ENCODE measurements at regions of chr19 and their contacts with region 1.

Region 1: DNA sequence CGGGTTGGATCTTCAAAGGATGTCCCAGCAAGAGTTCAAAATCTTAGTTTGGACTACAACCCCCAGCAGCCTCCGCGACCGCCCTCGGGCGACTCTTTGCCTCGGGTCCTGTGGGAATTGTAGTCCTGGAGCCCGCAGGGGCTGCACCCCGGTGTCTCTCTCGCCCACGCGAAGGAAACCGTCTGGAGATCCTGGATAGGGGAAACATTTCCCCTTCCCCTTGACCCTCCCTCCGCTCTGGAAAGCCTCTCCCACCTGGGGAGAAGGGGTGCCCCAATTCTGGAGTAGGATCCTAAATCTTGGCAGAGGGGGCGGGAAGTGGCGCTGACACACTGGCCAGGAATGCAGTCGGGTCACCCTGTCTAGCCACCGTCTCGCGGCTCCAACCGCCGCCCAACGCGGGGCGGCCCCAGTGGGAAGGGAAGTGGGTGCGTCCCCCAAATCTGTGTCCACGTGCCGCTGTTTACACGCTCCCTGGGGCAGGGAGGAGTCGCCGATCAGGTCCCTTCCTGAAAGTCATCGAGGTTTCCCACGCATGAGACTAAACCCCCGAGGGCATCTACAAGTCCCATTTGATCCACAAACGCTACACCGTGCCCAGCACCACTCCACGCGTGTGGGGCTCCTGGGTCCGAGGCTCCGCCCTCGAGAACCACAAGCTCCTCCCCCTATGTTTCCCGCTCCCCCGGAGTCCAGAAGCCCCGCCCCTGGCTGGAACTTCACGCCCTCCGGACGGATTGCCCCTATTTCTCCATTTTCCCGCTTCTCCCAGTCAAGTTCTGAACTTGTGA is 761 bp upstream of the PPP1R13L start:
- DNase-seq: peak; percentile 30
- ATAC-seq: peak; percentile 77
- H3K4me3 ChIP-seq: peak overlapping the region; percentile 98
- H3K27ac ChIP-seq: peak overlapping the region; percentile 89
- H3K4me1 ChIP-seq: peaks cover 4% of the 10 kb centered on the region
- H3K27me3 ChIP-seq: no peaks in the 10 kb centered on the region; a peak in 1 of 4 replicates
- CTCF ChIP-seq: no peak
- EP300 ChIP-seq: no peak
- POLR2A ChIP-seq: peak; percentile 45; the same call in 1 of the 2 replicates
- RAD21 ChIP-seq: no peak

Region 2: DNA sequence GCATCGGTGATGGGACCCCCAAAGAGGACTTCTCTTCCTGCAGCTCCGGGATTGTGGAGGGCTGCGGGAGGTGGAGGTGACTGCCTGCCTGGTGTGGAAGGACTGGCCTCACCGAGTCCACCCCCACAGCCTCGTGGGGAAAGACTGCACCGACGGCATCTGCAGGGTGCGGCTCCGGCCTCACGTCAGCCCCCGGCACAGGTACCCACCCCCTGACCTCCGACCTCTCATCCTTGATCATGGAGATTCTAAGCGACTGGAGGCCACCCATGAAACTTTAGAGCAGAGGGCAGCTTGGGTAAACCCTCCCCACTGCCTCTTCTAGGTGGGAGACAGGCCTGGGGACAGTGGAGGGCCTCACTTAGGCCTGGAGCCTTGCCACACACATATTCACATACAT is 383.6 kb before region 1 on chr19:
- CTCF ChIA-PET with region 1: no interaction called
- POLR2A ChIA-PET with region 1: no interaction called
- RAD21 ChIA-PET with region 1: no interaction called
- SMC1A ChIA-PET with region 1: no interaction called
- in situ Hi-C with region 1: no loop called
- intact Hi-C with region 1: no loop called
- DNase-seq: no peak
- ATAC-seq: no peak
- H3K4me3 ChIP-seq: no peak overlapping the region
- H3K27ac ChIP-seq: no peak overlapping the region
- H3K4me1 ChIP-seq: peaks cover 8% of the 10 kb centered on the region
- H3K27me3 ChIP-seq: no peaks in the 10 kb centered on the region
- CTCF ChIP-seq: no peak
- EP300 ChIP-seq: no peak
- POLR2A ChIP-seq: peak; percentile 46; the same call in 1 of the 2 replicates
- RAD21 ChIP-seq: no peak

Region 3: DNA sequence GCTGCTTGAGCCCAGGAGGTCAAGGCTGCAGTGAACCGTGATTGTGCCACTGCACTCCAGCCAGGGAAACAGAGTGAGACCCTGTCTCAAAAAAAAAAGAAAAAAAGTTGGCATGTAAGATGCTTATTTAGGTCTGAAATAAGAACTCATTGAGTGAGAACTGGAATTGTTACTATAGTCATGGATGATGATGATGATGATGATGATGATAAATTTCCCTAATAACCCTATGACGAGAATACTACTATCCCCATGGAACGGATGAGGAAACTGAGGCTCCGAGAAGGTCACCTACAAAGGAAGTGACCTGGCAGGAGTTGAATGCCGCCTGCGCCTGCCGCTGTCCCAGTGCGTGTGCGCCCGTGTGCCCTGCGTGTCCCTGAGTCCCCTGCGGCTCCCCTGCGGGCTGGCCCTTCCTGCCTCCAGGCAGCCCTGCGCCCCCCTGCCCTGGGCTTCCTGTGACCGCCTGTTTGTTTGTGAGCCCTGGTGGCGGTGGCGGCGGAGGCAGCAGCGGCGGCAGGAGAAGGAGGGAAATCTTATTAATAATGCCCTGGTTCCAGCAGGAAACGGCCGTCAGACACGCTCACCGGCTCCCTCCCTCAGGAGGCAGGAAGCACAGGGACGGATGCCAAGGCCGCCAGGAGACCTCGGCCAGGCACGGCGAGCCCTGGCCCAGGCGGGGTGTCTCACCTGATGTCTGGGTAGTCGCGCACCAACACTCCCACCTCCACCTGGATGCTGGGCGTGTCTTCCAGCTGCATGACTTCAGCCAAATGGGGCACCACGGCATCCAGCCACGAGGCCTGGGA is 190.0 kb before region 1 on chr19:
- CTCF ChIA-PET with region 1: no interaction called
- POLR2A ChIA-PET with region 1: no interaction called
- RAD21 ChIA-PET with region 1: no interaction called
- SMC1A ChIA-PET with region 1: no interaction called
- in situ Hi-C with region 1: no loop called
- intact Hi-C with region 1: no loop called
- DNase-seq: no peak
- ATAC-seq: no peak
- H3K4me3 ChIP-seq: no peak overlapping the region
- H3K27ac ChIP-seq: no peak overlapping the region
- H3K4me1 ChIP-seq: no peaks in the 10 kb centered on the region
- H3K27me3 ChIP-seq: peaks cover 2 to 3% of the 10 kb centered on the region in 2 experiments
- CTCF ChIP-seq: no peak
- EP300 ChIP-seq: no peak
- POLR2A ChIP-seq: no peak
- RAD21 ChIP-seq: no peak

Region 4: DNA sequence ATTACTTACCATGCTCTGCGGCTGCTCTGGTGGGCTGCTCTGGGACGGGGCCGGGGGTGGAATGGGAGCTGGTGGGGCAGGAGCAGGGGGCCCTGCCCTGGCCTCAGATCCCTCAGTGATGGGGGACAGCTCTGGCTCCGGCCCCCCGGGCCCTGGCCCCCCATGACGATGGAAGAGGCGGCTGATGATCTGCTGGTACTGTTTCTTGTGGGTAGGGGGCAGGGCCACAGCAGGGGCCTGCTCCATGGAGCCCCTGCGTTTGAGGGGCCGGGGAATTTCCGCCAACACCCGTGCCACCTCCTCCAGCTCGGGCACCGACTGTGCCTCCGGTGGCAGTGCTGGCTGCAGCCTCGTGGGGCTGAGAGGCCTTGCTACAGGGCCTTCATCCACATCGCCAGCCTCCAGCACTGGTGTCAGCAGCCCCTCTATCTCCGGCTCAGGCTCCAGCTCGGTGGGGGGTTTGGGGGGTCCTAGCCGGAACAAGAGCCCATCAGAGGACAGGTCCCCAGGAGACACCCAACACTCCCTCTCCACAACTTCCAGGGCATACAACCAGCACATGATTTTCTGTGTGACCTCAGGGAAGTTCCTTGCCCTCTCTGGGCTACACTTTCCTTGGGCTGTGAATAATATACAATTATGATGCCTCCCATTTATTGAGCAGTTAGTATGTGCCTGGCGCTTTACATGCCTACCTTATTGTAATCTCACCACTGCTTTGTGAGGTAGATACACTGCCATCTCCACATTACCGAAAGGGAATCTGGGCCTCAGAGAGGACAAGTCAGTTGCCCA is 13.6 kb before region 1 on chr19:
- CTCF ChIA-PET with region 1: interaction called, 18 read pairs
- POLR2A ChIA-PET with region 1: no interaction called
- RAD21 ChIA-PET with region 1: no interaction called
- SMC1A ChIA-PET with region 1: interaction called, 4 read pairs
- in situ Hi-C with region 1: no loop called
- intact Hi-C with region 1: no loop called
- DNase-seq: no peak
- ATAC-seq: no peak
- H3K4me3 ChIP-seq: no peak overlapping the region
- H3K27ac ChIP-seq: no peak overlapping the region
- H3K4me1 ChIP-seq: no peaks in the 10 kb centered on the region
- H3K27me3 ChIP-seq: no peaks in the 10 kb centered on the region
- CTCF ChIP-seq: no peak
- EP300 ChIP-seq: no peak
- POLR2A ChIP-seq: no peak
- RAD21 ChIP-seq: no peak

Region 5: GRCh38 chr19:45417151-45417550 is 11.5 kb after region 1 on chr19:
- CTCF ChIA-PET with region 1: interaction called, 42 read pairs
- POLR2A ChIA-PET with region 1: interaction called, 3 read pairs
- RAD21 ChIA-PET with region 1: interaction called, 7 read pairs
- SMC1A ChIA-PET with region 1: interaction called, 3 read pairs
- in situ Hi-C with region 1: no loop called
- intact Hi-C with region 1: loop called (anchors 1 kb)
- DNase-seq: no peak
- ATAC-seq: no peak
- H3K4me3 ChIP-seq: no peak overlapping the region
- H3K27ac ChIP-seq: no peak overlapping the region
- H3K4me1 ChIP-seq: peaks cover 23% of the 10 kb centered on the region
- H3K27me3 ChIP-seq: no peaks in the 10 kb centered on the region
- CTCF ChIP-seq: no peak
- EP300 ChIP-seq: no peak
- POLR2A ChIP-seq: no peak
- RAD21 ChIP-seq: no peak

Region 6: DNA sequence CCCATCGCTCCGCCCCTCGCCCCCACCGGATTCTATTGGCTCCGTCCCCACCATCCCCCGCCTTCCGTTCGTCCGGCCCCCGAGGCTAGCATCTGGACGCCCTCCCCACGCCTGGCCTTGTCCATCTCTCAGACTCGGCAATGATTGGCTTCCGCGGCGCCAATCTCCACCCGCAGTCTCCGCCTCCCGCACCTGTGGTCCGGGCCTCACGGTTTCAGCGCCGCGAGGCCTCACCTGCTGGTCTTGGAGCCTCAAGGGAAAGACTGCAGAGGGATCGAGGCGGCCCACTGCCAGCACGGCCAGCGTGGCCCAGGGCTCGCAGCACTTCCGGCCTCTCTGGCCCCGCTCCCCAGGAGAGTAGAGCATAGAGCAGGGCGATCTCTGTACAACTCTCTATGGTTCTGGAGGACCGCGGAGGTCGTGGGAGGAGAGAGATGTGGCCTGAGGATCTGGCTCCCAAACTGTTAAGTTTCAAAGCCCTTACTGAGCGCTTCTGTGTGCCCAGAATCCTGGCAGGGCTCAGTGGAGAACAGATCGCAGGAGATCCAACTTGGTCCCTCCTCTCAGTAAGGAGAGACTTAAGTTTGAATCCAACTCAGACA is 18.1 kb after region 1 on chr19 and contains the start of gene ERCC1:
- CTCF ChIA-PET with region 1: interaction called, 42 read pairs
- POLR2A ChIA-PET with region 1: interaction called, 16 read pairs
- RAD21 ChIA-PET with region 1: interaction called, 8 read pairs
- SMC1A ChIA-PET with region 1: interaction called, 8 read pairs
- in situ Hi-C with region 1: no loop called
- intact Hi-C with region 1: loop called (anchors 1 kb)
- DNase-seq: peak; percentile 89
- ATAC-seq: peak; percentile 83
- H3K4me3 ChIP-seq: peak within 1 kb of the TSS; percentile 82
- H3K27ac ChIP-seq: peak within 1 kb of the TSS; percentile 91
- H3K4me1 ChIP-seq: peaks cover 35% of the 10 kb centered on the region
- H3K27me3 ChIP-seq: no peaks in the 10 kb centered on the region
- CTCF ChIP-seq: no peak
- EP300 ChIP-seq: no peak
- POLR2A ChIP-seq: peak; percentile 93
- RAD21 ChIP-seq: no peak
- polyA plus RNA-seq, gene ERCC1: 14.7 to 36.8 TPM